Posterior vena cava (tissue), 2 donors: ENCODE measurements at regions of chr9 and their contacts with region 1.

Region 1: GRCh38 chr9:90102292-90102901 is 497.6 kb downstream of the GADD45G start:
- DNase-seq: peak; percentile 91

Region 2: GRCh38 chr9:89602978-89603766 is 499.2 kb before region 1 on chr9:
- intact Hi-C with region 1: loop called (anchors 1 to 2 kb)
- DNase-seq: peak; percentile 96

Region 3: DNA sequence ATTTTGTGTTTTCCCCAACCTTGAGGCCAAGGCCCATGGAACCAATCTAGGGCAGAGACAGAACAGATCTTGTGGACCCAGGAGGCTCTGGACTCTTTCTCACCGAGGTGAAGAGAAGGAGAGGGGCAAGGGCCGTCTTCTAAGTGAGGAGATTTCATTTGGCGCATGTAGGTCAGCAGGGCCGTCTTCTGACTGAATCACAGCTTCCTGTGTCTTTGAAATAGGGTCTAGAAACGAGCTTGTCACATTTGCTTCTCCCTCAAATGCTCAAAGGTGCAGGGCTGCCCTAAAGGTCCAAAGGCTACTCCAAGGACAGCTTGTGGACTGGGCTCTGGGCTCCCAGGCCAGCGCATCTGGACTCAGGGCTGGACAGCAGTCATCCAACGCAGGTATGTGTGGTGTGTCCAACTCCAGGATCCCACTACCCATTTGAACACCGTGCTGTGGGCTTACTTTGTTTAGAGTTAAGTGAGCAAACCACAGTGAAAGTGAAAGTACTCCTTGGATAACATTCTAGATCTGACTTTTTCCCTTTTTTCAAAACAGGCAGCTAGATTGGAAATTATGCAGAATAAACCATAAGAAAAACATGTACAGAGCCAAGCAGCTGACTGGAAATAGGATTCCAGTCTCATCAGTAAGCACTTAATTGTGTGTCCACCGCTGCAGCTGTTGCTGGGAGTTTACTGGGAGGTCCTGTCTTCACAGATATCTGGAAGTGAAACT is 140.6 kb before region 1 on chr9:
- intact Hi-C with region 1: no loop called
- DNase-seq: no peak

Region 4: DNA sequence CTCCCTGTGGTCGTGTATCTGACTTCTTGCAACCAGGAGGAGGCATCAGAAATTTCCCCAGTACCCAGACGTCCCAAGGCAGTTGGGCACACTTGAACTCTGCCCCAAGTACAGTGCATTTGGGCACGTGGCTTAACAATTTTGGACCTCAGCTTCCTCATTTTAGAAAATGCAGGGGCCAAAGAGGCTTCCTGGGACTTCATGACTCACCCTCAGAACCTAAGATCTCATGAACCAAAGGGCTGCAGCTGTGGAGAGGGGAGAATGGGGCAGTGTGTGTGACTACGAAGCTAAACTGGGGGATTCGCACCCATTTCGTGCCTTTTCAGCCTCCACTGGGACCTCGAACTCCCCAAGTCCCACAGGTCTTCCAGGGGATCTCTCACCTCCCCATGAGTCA is 758.4 kb after region 1 on chr9:
- intact Hi-C with region 1: loop called in 1 of 2 experiments (anchors 10 kb)
- DNase-seq: no peak